Calu3 (cell line): ENCODE measurements at regions of chr6 and their contacts with region 1.

Region 1: GRCh38 chr6:23316131-23316530 is 746.8 kb downstream of the HDGFL1 start:
- DNase-seq: no peak
- H3K4me3 Mint-ChIP-seq: no peak overlapping the region
- H3K27ac Mint-ChIP-seq: no peak overlapping the region
- H3K4me1 Mint-ChIP-seq: no peaks in the 10 kb centered on the region
- H3K27me3 Mint-ChIP-seq: no peaks in the 10 kb centered on the region
- CTCF ChIP-seq: no peak

Region 2: GRCh38 chr6:23184351-23184750 is 131.8 kb before region 1 on chr6:
- CTCF ChIA-PET with region 1: interaction called, 13 read pairs
- intact Hi-C with region 1: no loop called
- DNase-seq: no peak
- H3K4me3 Mint-ChIP-seq: no peak overlapping the region
- H3K27ac Mint-ChIP-seq: no peak overlapping the region
- H3K4me1 Mint-ChIP-seq: no peaks in the 10 kb centered on the region
- H3K27me3 Mint-ChIP-seq: no peaks in the 10 kb centered on the region
- CTCF ChIP-seq: no peak